ENCODE measurements at regions of chr1 and their contacts with region 1.

Region 1: DNA sequence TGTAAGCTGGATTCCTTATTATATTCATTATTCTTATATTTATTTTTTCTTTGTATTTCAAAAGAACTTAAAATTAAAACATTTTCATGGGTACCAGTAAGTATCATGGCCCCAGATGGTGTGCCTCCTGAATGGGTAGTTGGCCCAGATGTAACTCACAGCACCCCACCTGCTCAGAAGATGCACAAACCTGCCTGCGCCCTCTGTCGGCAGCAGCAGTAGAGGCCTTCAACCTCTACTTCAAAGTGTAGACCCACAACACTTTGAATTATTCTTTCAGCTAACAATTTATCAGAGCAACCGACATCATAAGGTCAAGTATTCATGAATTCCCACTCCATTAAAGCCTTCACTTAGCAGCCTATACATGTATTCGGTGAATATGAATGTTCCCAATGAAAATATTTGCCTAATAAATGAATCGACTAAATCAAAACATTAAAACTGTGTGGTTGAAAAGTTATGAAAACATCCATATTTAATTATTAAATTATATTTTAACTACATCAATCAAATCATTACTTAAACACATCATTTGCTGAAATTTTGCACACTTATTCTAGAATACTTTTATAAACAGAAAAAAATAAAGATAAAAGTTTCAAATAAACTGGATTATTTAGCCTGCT is 25.4 kb downstream of the PIGM start:
- DNase-seq: peak; percentile 58
- ATAC-seq: peak; percentile 93
- H3K4me3 ChIP-seq: no peak overlapping the region
- H3K27ac ChIP-seq: no peak overlapping the region
- H3K4me1 ChIP-seq: no peaks in the 10 kb centered on the region
- H3K27me3 ChIP-seq: peaks cover 0 to 10% of the 10 kb centered on the region in 2 experiments; a peak in 1 of 5 replicates
- CTCF ChIP-seq: peak; percentile 85
- EP300 ChIP-seq: no peak
- POLR2A ChIP-seq: no peak
- RAD21 ChIP-seq: peak; percentile 59

Region 2: GRCh38 chr1:159798893-159799292 is 207.5 kb before region 1 on chr1:
- CTCF ChIA-PET with region 1: interaction called, 34 read pairs
- POLR2A ChIA-PET with region 1: no interaction called
- in situ Hi-C with region 1: loop called (anchors 5 kb)
- intact Hi-C with region 1: loop called (anchors 1 kb)
- DNase-seq: peak; percentile 70
- ATAC-seq: peak; percentile 93
- H3K4me3 ChIP-seq: no peak overlapping the region
- H3K27ac ChIP-seq: no peak overlapping the region
- H3K4me1 ChIP-seq: no peaks in the 10 kb centered on the region
- H3K27me3 ChIP-seq: peaks cover 5 to 7% of the 10 kb centered on the region in 2 experiments; a peak in 2 of 5 replicates
- CTCF ChIP-seq: peak; percentile 62
- EP300 ChIP-seq: no peak
- POLR2A ChIP-seq: no peak
- RAD21 ChIP-seq: peak; percentile 47; the same call in 1 of the 2 replicates

Region 3: GRCh38 chr1:159936273-159936904 is 70.0 kb before region 1 on chr1:
- CTCF ChIA-PET with region 1: interaction called, 57 read pairs
- POLR2A ChIA-PET with region 1: no interaction called
- in situ Hi-C with region 1: loop called (anchors 5 kb)
- intact Hi-C with region 1: loop called (anchors 1 kb)
- DNase-seq: peak; percentile 30
- ATAC-seq: peak; percentile 87
- H3K4me3 ChIP-seq: no peak overlapping the region
- H3K27ac ChIP-seq: no peak overlapping the region
- H3K4me1 ChIP-seq: peaks cover 13% of the 10 kb centered on the region
- H3K27me3 ChIP-seq: peaks cover 13 to 51% of the 10 kb centered on the region in 2 experiments; a peak in 4 of 5 replicates
- CTCF ChIP-seq: peak; percentile 99
- EP300 ChIP-seq: no peak
- POLR2A ChIP-seq: no peak
- RAD21 ChIP-seq: peak; percentile 95

Region 4: GRCh38 chr1:159970932-159971342 is 35.5 kb before region 1 on chr1:
- CTCF ChIA-PET with region 1: no interaction called
- POLR2A ChIA-PET with region 1: no interaction called
- in situ Hi-C with region 1: no loop called
- intact Hi-C with region 1: loop called (anchors 2 kb)
- DNase-seq: peak; percentile 93
- ATAC-seq: peak; percentile 96
- H3K4me3 ChIP-seq: no peak overlapping the region; a peak in 1 of 6 replicates
- H3K27ac ChIP-seq: peak overlapping the region; percentile 27
- H3K4me1 ChIP-seq: peaks cover 32% of the 10 kb centered on the region
- H3K27me3 ChIP-seq: peaks cover 2 to 4% of the 10 kb centered on the region in 2 experiments; a peak in 2 of 5 replicates
- CTCF ChIP-seq: peak; percentile 15
- EP300 ChIP-seq: peak; percentile 45 to 78; a peak in 2 of 4 replicates
- POLR2A ChIP-seq: no peak
- RAD21 ChIP-seq: no peak

Region 5: DNA sequence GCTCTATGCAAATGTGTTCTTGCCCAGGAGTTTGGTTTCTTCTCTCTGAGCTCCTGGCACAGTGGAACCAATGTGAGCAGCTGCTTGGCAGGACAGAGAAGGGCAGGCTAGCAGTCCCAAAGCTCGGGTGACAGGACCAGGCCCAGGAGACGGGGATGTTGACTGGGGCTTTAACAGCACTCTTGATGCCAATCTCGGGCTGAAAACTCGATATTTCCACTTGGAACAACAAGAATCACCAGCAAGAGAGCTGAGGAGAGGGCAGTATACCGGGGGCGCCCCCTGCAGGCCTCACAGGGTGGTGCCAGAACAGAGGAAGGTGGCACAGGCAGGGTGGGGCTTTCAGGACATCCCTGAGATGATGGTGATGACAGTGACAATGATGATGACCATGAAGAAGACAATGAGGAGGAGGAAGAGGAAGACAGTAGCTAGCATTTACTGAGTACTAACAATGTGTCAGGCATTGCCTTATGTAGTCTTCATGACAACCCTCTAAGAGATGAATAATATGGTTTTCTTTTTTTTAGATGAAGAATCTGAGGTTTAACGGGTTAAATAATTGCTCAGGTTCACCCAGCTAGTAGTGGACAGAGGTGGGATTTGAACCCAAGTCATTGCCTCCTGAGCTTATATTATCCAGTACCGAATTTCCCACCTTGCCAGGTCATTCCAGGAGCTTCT is 72.2 kb after region 1 on chr1:
- CTCF ChIA-PET with region 1: interaction called, 11 read pairs
- POLR2A ChIA-PET with region 1: no interaction called
- in situ Hi-C with region 1: no loop called
- intact Hi-C with region 1: no loop called
- DNase-seq: peak; percentile 61
- ATAC-seq: peak; percentile 90
- H3K4me3 ChIP-seq: 0 out of 6 replicates have a peak overlapping the region, but pooled peaks of 1 of the 3 experiments have one; percentile 32
- H3K27ac ChIP-seq: no peak overlapping the region
- H3K4me1 ChIP-seq: peaks cover 64% of the 10 kb centered on the region
- H3K27me3 ChIP-seq: no peaks in the 10 kb centered on the region
- CTCF ChIP-seq: peak; percentile 90
- EP300 ChIP-seq: no peak
- POLR2A ChIP-seq: no peak
- RAD21 ChIP-seq: peak; percentile 80

Measured in HepG2 (cell line).